ENCODE measurements at regions of chr5 and their contacts with region 1.

Region 1: DNA sequence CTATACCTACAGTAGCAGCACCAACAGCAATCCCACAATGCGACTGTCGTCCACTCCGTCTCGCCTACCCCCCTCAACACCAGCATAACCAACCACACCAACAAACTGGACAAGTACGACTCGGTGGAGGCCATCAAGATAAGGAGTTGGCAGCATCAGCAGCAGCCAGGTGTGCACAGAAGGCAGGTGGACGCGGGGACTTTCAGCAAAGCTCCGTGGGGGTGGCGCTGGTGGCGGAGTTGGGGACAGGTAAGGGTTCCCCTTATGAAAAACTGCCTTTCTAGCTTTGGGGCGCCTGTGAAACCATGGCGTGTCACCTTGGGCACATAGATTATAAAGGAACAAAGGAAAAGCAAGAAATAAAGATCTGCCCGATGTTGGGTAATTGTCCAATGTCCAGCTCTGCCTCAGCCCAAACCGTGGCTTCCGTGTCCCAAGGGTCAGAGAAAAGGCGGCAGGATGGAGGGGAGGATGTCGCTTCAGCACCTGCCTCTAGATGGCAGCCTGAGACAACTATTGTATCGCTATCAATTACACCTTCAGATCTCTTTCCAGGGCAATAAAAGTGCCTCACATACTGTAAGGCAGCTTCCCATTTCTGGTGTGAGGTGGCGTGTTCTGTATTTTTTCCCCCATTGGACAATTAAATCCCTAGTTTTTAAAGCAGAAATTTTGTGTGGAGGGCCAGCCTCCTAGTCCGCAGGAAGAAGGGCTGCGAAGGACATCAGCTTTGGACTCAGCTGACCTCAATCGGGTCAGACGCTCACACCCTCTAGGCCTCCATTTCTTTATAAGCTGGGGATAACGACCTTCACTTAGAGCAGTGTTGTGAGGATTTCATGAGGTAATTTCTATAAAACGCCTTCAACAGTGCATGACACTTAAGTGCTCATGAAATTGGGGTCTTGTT is 58.8 kb downstream of the MTRR start:
- DNase-seq: peak in 3 of 9 experiments; percentile 6 to 34 (median 28)
- ATAC-seq: no peak
- H3K4me3 ChIP-seq: no peak overlapping the region
- H3K4me3 Mint-ChIP-seq: no peak overlapping the region
- H3K27ac ChIP-seq: no peak overlapping the region
- H3K27ac Mint-ChIP-seq: no peak overlapping the region
- H3K4me1 ChIP-seq: no peaks in the 10 kb centered on the region
- H3K4me1 Mint-ChIP-seq: peaks cover 2% of the 10 kb centered on the region
- H3K27me3 ChIP-seq: no peaks in the 10 kb centered on the region
- H3K27me3 Mint-ChIP-seq: peaks cover 8% of the 10 kb centered on the region
- CTCF ChIP-seq: peak; percentile 41

Region 2: DNA sequence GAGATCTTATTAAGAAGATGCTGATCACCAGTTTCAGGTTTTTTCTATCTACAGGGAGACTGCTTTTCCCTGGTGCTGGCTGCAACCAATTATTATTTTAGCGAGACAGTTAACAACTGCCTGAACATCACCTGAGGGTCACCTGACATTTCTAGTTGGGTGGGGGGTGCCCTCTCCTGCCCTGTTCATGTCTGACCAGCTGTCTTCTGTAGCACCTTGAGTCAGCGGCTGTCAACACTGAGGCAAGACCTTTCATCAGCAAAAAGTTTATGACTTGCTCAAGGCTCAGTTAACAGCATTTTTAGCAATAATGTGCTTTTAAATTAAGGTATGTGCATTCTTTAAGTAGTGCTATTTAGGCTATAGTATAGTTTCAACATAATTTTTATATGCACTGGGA is 473.8 kb before region 1 on chr5:
- CTCF ChIA-PET with region 1: no interaction called
- POLR2A ChIA-PET with region 1: no interaction called
- intact Hi-C with region 1: no loop called
- DNase-seq: no peak
- ATAC-seq: no peak
- H3K4me3 ChIP-seq: no peak overlapping the region
- H3K4me3 Mint-ChIP-seq: no peak overlapping the region
- H3K27ac ChIP-seq: no peak overlapping the region
- H3K27ac Mint-ChIP-seq: no peak overlapping the region
- H3K4me1 ChIP-seq: no peaks in the 10 kb centered on the region
- H3K4me1 Mint-ChIP-seq: no peaks in the 10 kb centered on the region
- H3K27me3 ChIP-seq: no peaks in the 10 kb centered on the region
- H3K27me3 Mint-ChIP-seq: no peaks in the 10 kb centered on the region
- CTCF ChIP-seq: no peak

Region 3: GRCh38 chr5:7910738-7911428 is 16.8 kb before region 1 on chr5:
- CTCF ChIA-PET with region 1: interaction called, 12 read pairs
- POLR2A ChIA-PET with region 1: no interaction called
- intact Hi-C with region 1: no loop called
- DNase-seq: no peak
- ATAC-seq: no peak
- H3K4me3 ChIP-seq: no peak overlapping the region
- H3K4me3 Mint-ChIP-seq: no peak overlapping the region
- H3K27ac ChIP-seq: no peak overlapping the region
- H3K27ac Mint-ChIP-seq: no peak overlapping the region
- H3K4me1 ChIP-seq: no peaks in the 10 kb centered on the region
- H3K4me1 Mint-ChIP-seq: no peaks in the 10 kb centered on the region
- H3K27me3 ChIP-seq: no peaks in the 10 kb centered on the region
- H3K27me3 Mint-ChIP-seq: peaks cover 3% of the 10 kb centered on the region
- CTCF ChIP-seq: no peak

Region 4: GRCh38 chr5:7941692-7942091 is 14.0 kb after region 1 on chr5:
- CTCF ChIA-PET with region 1: interaction called, 18 read pairs
- POLR2A ChIA-PET with region 1: no interaction called
- intact Hi-C with region 1: no loop called
- DNase-seq: no peak
- ATAC-seq: no peak
- H3K4me3 ChIP-seq: no peak overlapping the region
- H3K4me3 Mint-ChIP-seq: no peak overlapping the region
- H3K27ac ChIP-seq: no peak overlapping the region
- H3K27ac Mint-ChIP-seq: no peak overlapping the region
- H3K4me1 ChIP-seq: no peaks in the 10 kb centered on the region
- H3K4me1 Mint-ChIP-seq: no peaks in the 10 kb centered on the region
- H3K27me3 ChIP-seq: no peaks in the 10 kb centered on the region
- H3K27me3 Mint-ChIP-seq: peaks cover 23% of the 10 kb centered on the region
- CTCF ChIP-seq: no peak

Measured in CD8-positive, alpha-beta T cell (primary cell).